ENCODE measurements at regions of chr17 and their contacts with region 1.

Region 1: GRCh38 chr17:50177983-50178834 is 12.4 kb downstream of the SGCA start:
- DNase-seq: peak; percentile 27 to 73 (median 37)
- H3K4me3 ChIP-seq: no peak overlapping the region
- H3K4me3 Mint-ChIP-seq: peak overlapping the region in 7 of 8 donors; percentile 43 to 79 (median 61)
- H3K27ac ChIP-seq: no peak overlapping the region
- H3K27ac Mint-ChIP-seq: peak overlapping the region in 4 of 7 donors; percentile 17 to 80 (median 30)
- H3K4me1 ChIP-seq: peaks cover 4% of the 10 kb centered on the region
- H3K4me1 Mint-ChIP-seq: peaks cover 6 to 20% (median 9%) of the 10 kb centered on the region in 4 donors
- H3K27me3 ChIP-seq: no peaks in the 10 kb centered on the region
- H3K27me3 Mint-ChIP-seq: no peaks in the 10 kb centered on the region

Region 2: GRCh38 chr17:50114849-50115357 is 63.3 kb before region 1 on chr17:
- CTCF ChIA-PET with region 1: interaction called, 31 read pairs
- POLR2A ChIA-PET with region 1: interaction called, 3 read pairs
- intact Hi-C with region 1: loop called (anchors 1 kb)
- DNase-seq: peak in 4 of 5 donors; percentile 30 to 50 (median 42)
- H3K4me3 ChIP-seq: no peak overlapping the region
- H3K4me3 Mint-ChIP-seq: no peak overlapping the region
- H3K27ac ChIP-seq: no peak overlapping the region
- H3K27ac Mint-ChIP-seq: peak overlapping the region in 1 of 7 donors; percentile 45
- H3K4me1 ChIP-seq: peaks cover 13% of the 10 kb centered on the region
- H3K4me1 Mint-ChIP-seq: peaks cover 7 to 16% (median 12%) of the 10 kb centered on the region in 4 donors
- H3K27me3 ChIP-seq: peaks cover 7% of the 10 kb centered on the region
- H3K27me3 Mint-ChIP-seq: peaks cover 14 to 20% of the 10 kb centered on the region in 2 donors

Region 3: GRCh38 chr17:50161023-50161910 is 16.9 kb before region 1 on chr17:
- CTCF ChIA-PET with region 1: interaction called, 19 read pairs
- POLR2A ChIA-PET with region 1: no interaction called
- intact Hi-C with region 1: no loop called
- DNase-seq: peak; percentile 92 to 95 (median 93)
- H3K4me3 ChIP-seq: peak overlapping the region; percentile 76 to 78
- H3K4me3 Mint-ChIP-seq: peak overlapping the region; percentile 59 to 86 (median 74)
- H3K27ac ChIP-seq: peak overlapping the region; percentile 46
- H3K27ac Mint-ChIP-seq: peak overlapping the region; percentile 45 to 99 (median 93)
- H3K4me1 ChIP-seq: peaks cover 34% of the 10 kb centered on the region
- H3K4me1 Mint-ChIP-seq: peaks cover 23 to 53% (median 30%) of the 10 kb centered on the region in 4 donors
- H3K27me3 ChIP-seq: no peaks in the 10 kb centered on the region
- H3K27me3 Mint-ChIP-seq: no peaks in the 10 kb centered on the region

Region 4: GRCh38 chr17:50189550-50190292 is 11.5 kb after region 1 on chr17:
- CTCF ChIA-PET with region 1: no interaction called
- POLR2A ChIA-PET with region 1: no interaction called
- intact Hi-C with region 1: no loop called
- DNase-seq: no peak
- H3K4me3 ChIP-seq: no peak overlapping the region
- H3K4me3 Mint-ChIP-seq: no peak overlapping the region
- H3K27ac ChIP-seq: no peak overlapping the region
- H3K27ac Mint-ChIP-seq: peak overlapping the region in 1 of 7 donors; percentile 17
- H3K4me1 ChIP-seq: no peaks in the 10 kb centered on the region
- H3K4me1 Mint-ChIP-seq: no peaks in the 10 kb centered on the region
- H3K27me3 ChIP-seq: no peaks in the 10 kb centered on the region
- H3K27me3 Mint-ChIP-seq: no peaks in the 10 kb centered on the region